Activated CD4-positive, alpha-beta T cell treated with anti-CD3 and anti-CD28 coated beads, Interleukin-2, amount 10 ng/mL, durations not matched to agents 24 days and 14 days (primary cell): ENCODE measurements at regions of chr6 and their contacts with region 1.

Region 1: DNA sequence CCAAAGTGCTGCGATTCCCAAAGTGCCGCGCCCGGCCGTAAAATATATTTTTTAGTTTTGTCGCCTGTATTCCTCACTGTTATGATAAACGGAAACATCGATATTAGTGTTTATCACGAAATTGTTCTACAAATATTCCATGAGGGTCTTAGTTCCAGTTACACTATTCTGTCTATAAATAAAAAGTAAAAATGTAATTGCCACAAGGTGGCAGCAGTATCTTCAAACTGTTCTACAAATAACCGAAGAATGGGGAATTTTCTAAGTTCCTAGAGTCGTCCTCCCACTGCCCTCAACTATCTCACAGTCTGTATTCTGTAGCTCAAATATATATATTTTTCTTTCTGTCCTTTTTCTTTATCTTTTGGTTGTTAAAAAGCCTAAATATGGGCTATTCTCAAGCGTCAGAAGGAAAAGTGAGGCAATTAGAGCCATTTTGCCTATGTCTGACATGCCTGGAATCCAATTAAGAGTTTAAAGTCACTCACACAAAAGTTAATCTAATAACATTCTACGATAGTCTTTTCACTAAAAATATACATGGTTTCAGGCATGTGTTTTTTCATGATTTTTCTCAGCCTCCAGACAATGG is 14.2 kb upstream of the FAM162B start:
- DNase-seq: no peak
- H3K4me3 Mint-ChIP-seq: no peak overlapping the region
- H3K27ac Mint-ChIP-seq: no peak overlapping the region
- H3K4me1 Mint-ChIP-seq: no peaks in the 10 kb centered on the region
- H3K27me3 Mint-ChIP-seq: peaks cover 2% of the 10 kb centered on the region

Region 2: DNA sequence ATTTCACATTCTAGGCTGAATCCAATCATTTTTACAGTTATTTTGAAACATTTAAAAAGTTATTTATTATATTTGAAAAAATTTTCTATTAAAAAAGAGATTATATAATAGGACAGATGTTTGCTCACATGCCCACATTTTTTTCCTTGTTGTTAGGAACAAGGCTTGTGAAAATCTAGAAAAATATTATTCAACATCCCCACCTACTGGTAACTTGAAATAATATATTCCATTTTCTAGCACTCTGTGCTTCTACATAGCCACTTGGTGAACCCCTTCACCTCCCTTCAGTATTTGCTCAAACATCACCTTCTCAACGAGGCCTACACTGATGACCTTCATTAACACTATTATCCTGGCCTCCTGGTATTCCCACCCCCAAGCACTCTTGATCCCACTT is 67.6 kb after region 1 on chr6:
- intact Hi-C with region 1: loop called (anchors 2 kb)
- DNase-seq: no peak
- H3K4me3 Mint-ChIP-seq: no peak overlapping the region
- H3K27ac Mint-ChIP-seq: no peak overlapping the region
- H3K4me1 Mint-ChIP-seq: no peaks in the 10 kb centered on the region
- H3K27me3 Mint-ChIP-seq: no peaks in the 10 kb centered on the region

Region 3: GRCh38 chr6:116876635-116877611 is 97.3 kb after region 1 on chr6 and contains the start of gene RFX6:
- intact Hi-C with region 1: no loop called
- DNase-seq: no peak
- H3K4me3 Mint-ChIP-seq: peak within 1 kb of the TSS; percentile 69
- H3K27ac Mint-ChIP-seq: no peak within 1 kb of the TSS
- H3K4me1 Mint-ChIP-seq: peaks cover 2% of the 10 kb centered on the region
- H3K27me3 Mint-ChIP-seq: peaks cover 34% of the 10 kb centered on the region
- total RNA-seq, gene RFX6: not detected in 2 replicates